ENCODE measurements at regions of chr1 and their contacts with region 1.

Region 1: GRCh38 chr1:51768971-51769588 is 109.4 kb downstream of the NRDC start:
- DNase-seq: no peak
- ATAC-seq: peak; percentile 86
- H3K4me3 ChIP-seq: no peak overlapping the region
- H3K27ac ChIP-seq: no peak overlapping the region
- H3K4me1 ChIP-seq: peaks cover 3% of the 10 kb centered on the region; the same call in 1 of the 2 replicates
- H3K27me3 ChIP-seq: no peaks in the 10 kb centered on the region
- CTCF ChIP-seq: peak; percentile 58 to 74 (median 69)
- EP300 ChIP-seq: no peak
- POLR2A ChIP-seq: no peak
- RAD21 ChIP-seq: peak; percentile 74

Region 2: GRCh38 chr1:51535006-51535592 is 234.0 kb before region 1 on chr1:
- CTCF ChIA-PET with region 1: interaction called, 10 read pairs
- POLR2A ChIA-PET with region 1: no interaction called
- RAD21 ChIA-PET with region 1: interaction called, 3 read pairs
- SMC1A ChIA-PET with region 1: interaction called, 6 read pairs
- in situ Hi-C with region 1: no loop called
- intact Hi-C with region 1: no loop called
- DNase-seq: peak; percentile 54
- ATAC-seq: peak; percentile 72
- H3K4me3 ChIP-seq: no peak overlapping the region
- H3K27ac ChIP-seq: peak overlapping the region; percentile 27; the same call in 1 of the 2 replicates
- H3K4me1 ChIP-seq: peaks cover 11% of the 10 kb centered on the region
- H3K27me3 ChIP-seq: no peaks in the 10 kb centered on the region
- CTCF ChIP-seq: peak; percentile 70 to 85 (median 81)
- EP300 ChIP-seq: no peak
- POLR2A ChIP-seq: no peak
- RAD21 ChIP-seq: peak; percentile 93

Region 3: GRCh38 chr1:51622455-51622913 is 146.6 kb before region 1 on chr1:
- CTCF ChIA-PET with region 1: interaction called, 75 read pairs
- POLR2A ChIA-PET with region 1: no interaction called
- RAD21 ChIA-PET with region 1: interaction called, 34 read pairs
- SMC1A ChIA-PET with region 1: interaction called, 95 read pairs
- in situ Hi-C with region 1: loop called (anchors 5 kb)
- intact Hi-C with region 1: loop called (anchors 2 kb)
- DNase-seq: no peak
- ATAC-seq: peak; percentile 58
- H3K4me3 ChIP-seq: no peak overlapping the region
- H3K27ac ChIP-seq: no peak overlapping the region
- H3K4me1 ChIP-seq: no peaks in the 10 kb centered on the region
- H3K27me3 ChIP-seq: no peaks in the 10 kb centered on the region
- CTCF ChIP-seq: no peak
- EP300 ChIP-seq: no peak
- POLR2A ChIP-seq: no peak
- RAD21 ChIP-seq: no peak

Region 4: GRCh38 chr1:51656374-51656773 is 112.7 kb before region 1 on chr1:
- CTCF ChIA-PET with region 1: interaction called, 13 read pairs
- POLR2A ChIA-PET with region 1: no interaction called
- RAD21 ChIA-PET with region 1: interaction called, 3 read pairs
- SMC1A ChIA-PET with region 1: interaction called, 7 read pairs
- in situ Hi-C with region 1: no loop called
- intact Hi-C with region 1: no loop called
- DNase-seq: no peak
- ATAC-seq: no peak
- H3K4me3 ChIP-seq: no peak overlapping the region
- H3K27ac ChIP-seq: no peak overlapping the region
- H3K4me1 ChIP-seq: no peaks in the 10 kb centered on the region
- H3K27me3 ChIP-seq: no peaks in the 10 kb centered on the region
- CTCF ChIP-seq: no peak
- EP300 ChIP-seq: no peak
- POLR2A ChIP-seq: no peak
- RAD21 ChIP-seq: no peak

Region 5: GRCh38 chr1:51699376-51699775 is 69.7 kb before region 1 on chr1:
- CTCF ChIA-PET with region 1: interaction called, 5 read pairs
- POLR2A ChIA-PET with region 1: no interaction called
- RAD21 ChIA-PET with region 1: no interaction called
- SMC1A ChIA-PET with region 1: interaction called, 12 read pairs
- in situ Hi-C with region 1: no loop called
- intact Hi-C with region 1: no loop called
- DNase-seq: no peak
- ATAC-seq: no peak
- H3K4me3 ChIP-seq: no peak overlapping the region
- H3K27ac ChIP-seq: no peak overlapping the region
- H3K4me1 ChIP-seq: no peaks in the 10 kb centered on the region
- H3K27me3 ChIP-seq: no peaks in the 10 kb centered on the region
- CTCF ChIP-seq: no peak
- EP300 ChIP-seq: no peak
- POLR2A ChIP-seq: no peak
- RAD21 ChIP-seq: no peak

Region 6: GRCh38 chr1:51736702-51737101 is 32.4 kb before region 1 on chr1:
- CTCF ChIA-PET with region 1: interaction called, 21 read pairs
- POLR2A ChIA-PET with region 1: interaction called, 6 read pairs
- RAD21 ChIA-PET with region 1: interaction called, 5 read pairs
- SMC1A ChIA-PET with region 1: interaction called, 10 read pairs
- in situ Hi-C with region 1: no loop called
- intact Hi-C with region 1: no loop called
- DNase-seq: no peak
- ATAC-seq: peak; percentile 31; the same call in 2 of the 3 replicates
- H3K4me3 ChIP-seq: no peak overlapping the region
- H3K27ac ChIP-seq: no peak overlapping the region
- H3K4me1 ChIP-seq: peaks cover 25% of the 10 kb centered on the region; the same call in 1 of the 2 replicates
- H3K27me3 ChIP-seq: no peaks in the 10 kb centered on the region
- CTCF ChIP-seq: no peak
- EP300 ChIP-seq: no peak
- POLR2A ChIP-seq: no peak
- RAD21 ChIP-seq: no peak